PC-9 (cell line): ENCODE measurements at regions of chr15 and their contacts with region 1.

Region 1: DNA sequence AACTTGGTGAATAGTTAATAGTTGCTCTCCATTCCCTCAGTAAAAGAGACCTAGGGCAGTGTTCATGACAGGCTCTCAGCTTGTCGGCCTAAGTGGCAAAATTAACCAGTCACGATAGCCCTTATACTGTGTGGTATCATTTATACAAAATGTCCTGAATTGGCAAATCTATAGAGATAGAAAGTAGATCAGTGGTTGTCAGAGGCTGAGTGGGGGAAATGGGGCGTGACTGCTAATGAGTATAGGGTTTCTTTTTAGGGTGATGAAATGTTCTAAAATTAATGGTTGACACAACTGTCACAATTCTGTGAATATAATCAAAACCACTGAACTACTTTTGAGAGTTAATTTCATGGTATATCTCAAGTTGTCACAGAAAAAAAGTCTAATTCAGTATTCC is 20.9 kb downstream of the ARIH1 start:
- DNase-seq: no peak
- H3K4me3 ChIP-seq: no peak overlapping the region
- H3K27ac ChIP-seq: no peak overlapping the region
- H3K4me1 ChIP-seq: 0 out of 2 replicates have a peak, but pooled peaks cover 3% of the 10 kb centered on the region
- H3K27me3 ChIP-seq: no peaks in the 10 kb centered on the region
- CTCF ChIP-seq: no peak

Region 2: DNA sequence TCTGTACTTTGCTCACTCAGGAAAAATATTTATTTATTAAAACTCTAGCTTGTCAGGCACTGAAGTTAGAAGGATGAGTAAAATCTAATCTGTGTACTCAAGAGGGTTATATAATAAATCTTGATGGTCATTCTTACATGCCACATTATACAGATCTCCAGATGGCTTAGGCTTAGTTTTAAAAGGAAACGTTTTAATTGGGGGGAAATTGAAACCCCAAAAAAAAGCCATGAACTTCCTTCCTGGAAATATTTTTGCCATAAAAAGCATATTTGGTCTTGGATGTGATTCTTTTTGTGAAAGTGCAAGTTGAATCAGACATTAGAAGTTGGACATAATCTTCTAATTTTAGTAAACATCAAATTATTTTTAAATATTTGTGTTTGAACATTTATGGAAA is 370.8 kb before region 1 on chr15:
- CTCF ChIA-PET with region 1: no interaction called
- POLR2A ChIA-PET with region 1: interaction called, 10 read pairs
- intact Hi-C with region 1: no loop called
- DNase-seq: no peak
- H3K4me3 ChIP-seq: no peak overlapping the region
- H3K27ac ChIP-seq: no peak overlapping the region
- H3K4me1 ChIP-seq: 0 out of 2 replicates have a peak, but pooled peaks cover under 1% of the 10 kb centered on the region
- H3K27me3 ChIP-seq: no peaks in the 10 kb centered on the region
- CTCF ChIP-seq: no peak